ENCODE measurements at regions of chr7 and their contacts with region 1.

Region 1: DNA sequence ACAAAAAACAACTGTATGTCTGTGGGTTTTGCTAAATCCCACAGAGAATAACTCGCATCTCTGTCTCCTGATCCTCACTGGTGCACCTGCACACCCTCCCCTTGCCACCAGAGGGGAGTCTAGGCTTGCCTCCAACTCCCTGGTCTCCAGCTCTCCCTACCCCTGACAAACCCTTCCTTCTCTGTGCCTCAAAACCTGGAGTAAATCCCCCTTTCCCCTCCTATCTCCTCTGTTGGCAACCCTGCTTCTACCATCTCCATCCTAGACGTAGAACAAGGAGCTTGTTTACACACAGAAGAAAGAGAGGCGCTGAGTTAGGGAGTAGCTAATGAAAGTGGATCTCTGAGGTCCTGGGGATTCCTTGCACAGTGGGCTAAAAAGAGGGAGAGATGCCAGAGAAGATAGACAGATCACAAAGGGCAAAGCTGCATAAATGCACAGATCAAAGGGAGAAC is 6.0 kb downstream of the MBLAC1 start:
- DNase-seq: no peak
- ATAC-seq: peak; percentile 80

Region 2: GRCh38 chr7:99975782-99976521 is 156.8 kb before region 1 on chr7 and contains the start of gene AZGP1:
- intact Hi-C with region 1: no loop called
- DNase-seq: no peak
- ATAC-seq: peak; percentile 85
- total RNA-seq, gene AZGP1: 120 TPM

Region 3: DNA sequence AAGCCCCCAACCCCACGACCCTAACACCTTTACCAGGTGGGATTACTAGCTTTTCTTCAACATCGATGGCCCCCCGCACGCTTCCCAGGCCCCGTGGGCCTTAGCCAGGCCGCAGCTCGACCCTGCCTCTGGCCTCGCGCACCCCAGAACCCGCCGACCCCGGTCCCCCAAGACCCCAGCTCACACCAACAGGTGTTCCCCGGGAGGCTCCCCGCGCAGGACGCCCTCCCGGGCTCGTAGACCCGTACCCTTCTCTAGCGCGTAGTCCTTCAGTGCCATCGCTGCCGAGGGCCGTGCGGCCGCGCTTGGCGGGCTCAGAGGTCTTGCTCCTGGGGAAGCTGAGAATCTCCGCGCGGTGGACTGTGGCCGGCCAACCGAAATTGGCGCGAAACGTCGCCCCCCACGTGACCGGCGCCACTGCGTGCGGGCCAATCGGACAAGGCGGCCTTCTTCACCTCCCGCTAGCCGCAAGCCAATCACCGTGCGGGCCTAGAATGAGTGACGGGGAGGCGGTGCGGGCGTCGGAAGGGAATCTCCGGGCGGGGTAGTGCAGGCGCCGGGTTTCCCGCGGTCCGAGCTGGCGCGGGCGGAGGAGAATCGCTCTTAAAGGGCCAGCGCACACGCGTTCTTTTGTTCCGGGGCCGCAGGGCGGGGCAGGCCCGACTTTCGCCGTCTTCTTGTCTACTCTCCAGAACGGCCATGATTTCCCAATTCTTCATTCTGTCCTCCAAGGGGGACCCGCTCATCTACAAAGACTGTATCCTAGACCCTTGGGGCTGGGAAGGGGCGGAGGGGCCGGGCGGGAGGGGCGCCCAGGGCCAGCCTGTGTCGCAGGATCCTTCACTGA is 31.5 kb before region 1 on chr7 and contains the starts of genes AP4M1 and MCM7:
- intact Hi-C with region 1: no loop called
- DNase-seq: peak; percentile 99
- ATAC-seq: peak; percentile 97
- total RNA-seq, gene AP4M1: 19.5 TPM
- total RNA-seq, gene MCM7: 42.4 TPM

Region 4: DNA sequence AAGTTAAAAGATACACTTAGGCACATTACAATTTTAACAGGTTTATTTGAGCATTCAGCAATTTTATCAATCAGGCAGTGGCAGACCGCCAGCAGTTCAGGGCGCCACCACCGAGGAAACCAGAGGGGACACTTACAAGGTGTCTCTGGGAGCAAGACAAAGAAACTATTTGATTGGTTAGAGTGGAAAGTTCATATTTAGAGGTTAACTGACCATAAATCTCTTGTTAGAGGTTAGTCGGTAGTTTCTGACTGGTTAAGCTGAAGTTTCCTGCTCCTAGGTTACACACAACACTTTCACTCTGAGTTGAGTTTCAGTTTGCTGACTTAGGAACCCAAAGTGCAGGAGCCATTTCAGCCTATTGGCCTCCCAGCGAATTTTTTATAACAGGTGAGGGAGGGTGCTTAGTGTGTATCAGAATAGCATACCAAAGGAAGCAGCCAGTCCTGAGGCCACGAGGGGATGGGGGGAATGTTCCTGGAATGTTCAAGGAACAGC is 76.2 kb after region 1 on chr7:
- intact Hi-C with region 1: loop called (anchors 10 kb)
- DNase-seq: no peak
- ATAC-seq: no peak

Region 5: DNA sequence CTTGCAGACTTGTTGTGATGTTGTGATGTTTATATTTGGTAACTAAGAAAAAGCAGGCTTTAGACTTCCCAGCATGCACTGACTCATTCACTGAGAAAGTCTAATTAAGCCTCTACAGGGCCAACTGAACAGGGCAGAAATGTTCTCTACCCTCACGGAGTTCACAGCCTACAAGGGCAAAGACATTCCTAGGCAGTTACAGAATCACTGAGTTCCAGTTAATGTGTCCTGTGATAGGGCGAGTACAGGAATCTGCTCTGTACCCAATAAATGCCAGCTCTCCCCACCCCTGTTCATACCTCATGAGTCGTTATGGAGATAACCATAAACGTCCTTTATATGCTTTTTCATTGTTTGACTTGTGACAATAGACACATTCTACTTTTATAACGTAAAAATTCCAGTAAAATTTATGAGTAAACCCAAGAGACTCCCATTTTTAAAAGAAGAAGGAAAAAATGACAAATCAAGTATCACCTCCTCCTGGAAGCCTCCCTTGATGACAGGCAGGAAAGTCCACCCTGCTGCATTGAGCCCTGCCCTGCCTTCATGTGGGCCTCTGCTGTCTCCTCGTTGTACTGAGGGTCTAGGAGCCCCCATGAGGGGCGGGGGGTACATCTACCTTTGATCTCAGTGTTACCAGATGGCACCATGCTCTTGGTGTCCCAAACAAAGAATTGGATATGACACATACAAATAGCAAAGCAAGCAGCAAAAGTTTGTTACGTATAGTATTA is 850.9 kb after region 1 on chr7:
- intact Hi-C with region 1: no loop called
- DNase-seq: no peak
- ATAC-seq: no peak

Measured in sciatic nerve (tissue), 2 donors.